Caco-2 (cell line): ENCODE measurements at regions of chr4 and their contacts with region 1.

Region 1: GRCh38 chr4:121656269-121656641 is 40.5 kb downstream of the ANXA5 start:
- DNase-seq: peak; percentile 66 to 72
- H3K4me3 ChIP-seq: no peak overlapping the region
- H3K4me3 Mint-ChIP-seq: no peak overlapping the region
- H3K27ac Mint-ChIP-seq: no peak overlapping the region
- H3K4me1 ChIP-seq: no peaks in the 10 kb centered on the region
- H3K4me1 Mint-ChIP-seq: peaks cover 9% of the 10 kb centered on the region
- H3K27me3 ChIP-seq: no peaks in the 10 kb centered on the region
- H3K27me3 Mint-ChIP-seq: no peaks in the 10 kb centered on the region
- CTCF ChIP-seq: peak in 1 of 2 experiments; percentile 56

Region 2: DNA sequence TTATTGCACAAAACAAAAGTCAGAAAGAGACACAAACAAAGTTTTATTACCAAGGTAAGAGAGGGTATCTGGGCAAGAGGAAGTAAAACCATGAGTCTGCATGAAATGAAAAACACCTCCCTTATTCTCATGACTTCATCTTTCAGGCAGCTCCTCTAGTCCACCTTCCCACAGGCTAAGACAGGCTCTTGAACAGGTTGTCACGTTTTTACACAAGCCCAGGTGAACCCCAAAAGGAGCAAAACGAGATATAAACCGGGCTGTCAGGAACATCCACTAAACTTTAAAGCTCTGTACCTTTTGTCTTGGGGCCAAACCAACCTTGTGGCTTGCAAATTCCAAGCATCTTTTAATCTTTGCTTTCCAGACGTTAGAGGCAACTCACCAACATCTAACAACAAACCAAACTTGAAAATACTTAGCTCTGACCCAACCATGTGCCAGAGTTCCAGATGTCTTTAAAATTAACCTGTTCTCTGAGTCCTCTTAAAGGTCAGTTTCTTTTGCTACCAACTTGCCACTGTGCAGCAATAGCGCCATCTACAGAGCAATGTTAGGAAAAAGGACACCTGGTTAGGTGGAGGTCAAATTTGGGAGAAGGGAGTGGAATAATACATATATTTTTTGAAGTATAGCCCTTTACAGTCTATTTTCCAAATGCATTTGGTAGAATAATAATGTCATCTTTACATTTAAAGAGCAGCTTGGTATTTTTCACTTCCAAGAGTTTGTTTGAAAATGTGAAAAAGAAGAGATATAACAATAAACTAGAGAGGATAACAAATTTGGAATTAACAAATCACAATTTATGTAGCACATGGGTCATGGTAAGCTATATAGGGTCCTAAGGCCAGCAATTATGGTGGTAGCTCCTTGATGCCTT is 348.6 kb before region 1 on chr4:
- CTCF ChIA-PET with region 1: no interaction called
- POLR2A ChIA-PET with region 1: no interaction called
- intact Hi-C with region 1: loop called (anchors 5 kb)
- DNase-seq: peak; percentile 56 to 62
- H3K4me3 ChIP-seq: no peak overlapping the region
- H3K4me3 Mint-ChIP-seq: no peak overlapping the region
- H3K27ac Mint-ChIP-seq: peak overlapping the region; percentile 20
- H3K4me1 ChIP-seq: peaks cover 38% of the 10 kb centered on the region
- H3K4me1 Mint-ChIP-seq: peaks cover 20% of the 10 kb centered on the region
- H3K27me3 ChIP-seq: no peaks in the 10 kb centered on the region
- H3K27me3 Mint-ChIP-seq: no peaks in the 10 kb centered on the region
- CTCF ChIP-seq: peak; percentile 72 to 86

Region 3: DNA sequence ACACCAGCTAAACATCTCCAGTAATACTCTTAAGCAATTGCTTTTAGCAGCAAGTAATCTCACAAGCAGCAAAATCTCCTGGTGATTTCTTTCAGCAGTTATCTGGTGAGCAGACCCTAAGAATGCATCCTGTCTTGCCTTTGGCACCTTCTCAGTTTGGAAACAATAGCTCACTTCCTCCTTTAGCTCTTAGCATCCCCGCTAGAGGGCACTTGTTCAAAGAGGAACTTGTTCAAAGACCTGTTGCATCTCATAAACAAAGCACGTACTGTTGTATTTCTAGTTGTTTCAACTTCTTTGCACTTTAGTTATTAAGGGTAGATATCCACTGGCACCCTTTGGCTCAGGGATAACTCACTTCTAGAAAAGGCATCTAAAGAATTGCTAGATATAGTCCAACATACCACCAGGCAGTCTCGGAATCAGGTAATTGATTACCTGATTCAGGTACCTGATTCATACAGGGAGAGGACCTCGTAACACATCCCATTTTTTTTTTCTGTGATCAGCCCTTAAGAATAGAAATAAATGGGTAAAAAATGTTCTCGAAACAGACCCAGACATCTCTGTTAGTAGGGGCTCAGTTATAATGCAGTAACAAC is 193.5 kb before region 1 on chr4:
- CTCF ChIA-PET with region 1: interaction called, 15 read pairs
- POLR2A ChIA-PET with region 1: no interaction called
- intact Hi-C with region 1: loop called (anchors 1 kb)
- DNase-seq: peak; percentile 50 to 62
- H3K4me3 ChIP-seq: no peak overlapping the region
- H3K4me3 Mint-ChIP-seq: no peak overlapping the region
- H3K27ac Mint-ChIP-seq: no peak overlapping the region
- H3K4me1 ChIP-seq: no peaks in the 10 kb centered on the region
- H3K4me1 Mint-ChIP-seq: no peaks in the 10 kb centered on the region
- H3K27me3 ChIP-seq: no peaks in the 10 kb centered on the region
- H3K27me3 Mint-ChIP-seq: peaks cover 2% of the 10 kb centered on the region
- CTCF ChIP-seq: peak; percentile 60 to 77

Region 4: GRCh38 chr4:121642292-121642691 is 14.0 kb before region 1 on chr4:
- CTCF ChIA-PET with region 1: interaction called, 3 read pairs
- POLR2A ChIA-PET with region 1: no interaction called
- intact Hi-C with region 1: loop called (anchors 1 kb)
- DNase-seq: no peak
- H3K4me3 ChIP-seq: no peak overlapping the region
- H3K4me3 Mint-ChIP-seq: peak overlapping the region; percentile 62
- H3K27ac Mint-ChIP-seq: peak overlapping the region; percentile 93
- H3K4me1 ChIP-seq: peaks cover 30% of the 10 kb centered on the region
- H3K4me1 Mint-ChIP-seq: peaks cover 23% of the 10 kb centered on the region
- H3K27me3 ChIP-seq: no peaks in the 10 kb centered on the region
- H3K27me3 Mint-ChIP-seq: no peaks in the 10 kb centered on the region
- CTCF ChIP-seq: no peak